ENCODE measurements at regions of chr2 and their contacts with region 1.

Region 1: GRCh38 chr2:118847497-118848172 is at the start of gene EN1:
- DNase-seq: peak; percentile 74
- H3K4me3 ChIP-seq: peak within 1 kb of the TSS; percentile 92
- CTCF ChIP-seq: no peak

Region 2: GRCh38 chr2:118668431-118669424 is 178.9 kb before region 1 on chr2:
- CTCF ChIA-PET with region 1: interaction called, 3 read pairs
- POLR2A ChIA-PET with region 1: interaction called, 14 read pairs
- DNase-seq: peak; percentile 97
- H3K4me3 ChIP-seq: no peak overlapping the region
- CTCF ChIP-seq: no peak

Region 3: DNA sequence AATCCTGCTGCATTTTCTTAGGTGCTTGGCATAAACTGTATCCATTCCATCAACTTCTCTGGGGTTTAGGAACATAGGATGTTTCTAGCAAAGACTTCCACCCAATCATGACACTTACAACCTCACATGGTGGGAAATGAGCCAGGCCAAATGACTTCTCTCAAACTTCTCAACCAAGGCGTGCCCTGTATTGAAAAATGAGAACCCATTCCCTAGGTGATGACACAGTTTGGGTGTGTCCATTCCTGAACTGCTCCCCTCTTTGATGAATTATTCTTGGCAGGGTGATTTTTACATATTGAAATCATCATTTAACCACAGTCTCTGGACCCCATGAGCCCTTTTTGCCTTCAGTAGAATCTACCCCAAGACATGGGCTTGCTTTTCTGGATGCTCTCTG is 161.3 kb before region 1 on chr2:
- CTCF ChIA-PET with region 1: no interaction called
- POLR2A ChIA-PET with region 1: no interaction called
- DNase-seq: no peak
- H3K4me3 ChIP-seq: no peak overlapping the region
- CTCF ChIP-seq: no peak

Region 4: GRCh38 chr2:118878531-118879149 is 31.0 kb after region 1 on chr2:
- CTCF ChIA-PET with region 1: no interaction called
- POLR2A ChIA-PET with region 1: no interaction called
- DNase-seq: no peak
- H3K4me3 ChIP-seq: no peak overlapping the region
- CTCF ChIP-seq: no peak

Measured in AG04449 (cell line).